Heart right ventricle (tissue), 16 donors: ENCODE measurements at regions of chr4 and their contacts with region 1.

Region 1: DNA sequence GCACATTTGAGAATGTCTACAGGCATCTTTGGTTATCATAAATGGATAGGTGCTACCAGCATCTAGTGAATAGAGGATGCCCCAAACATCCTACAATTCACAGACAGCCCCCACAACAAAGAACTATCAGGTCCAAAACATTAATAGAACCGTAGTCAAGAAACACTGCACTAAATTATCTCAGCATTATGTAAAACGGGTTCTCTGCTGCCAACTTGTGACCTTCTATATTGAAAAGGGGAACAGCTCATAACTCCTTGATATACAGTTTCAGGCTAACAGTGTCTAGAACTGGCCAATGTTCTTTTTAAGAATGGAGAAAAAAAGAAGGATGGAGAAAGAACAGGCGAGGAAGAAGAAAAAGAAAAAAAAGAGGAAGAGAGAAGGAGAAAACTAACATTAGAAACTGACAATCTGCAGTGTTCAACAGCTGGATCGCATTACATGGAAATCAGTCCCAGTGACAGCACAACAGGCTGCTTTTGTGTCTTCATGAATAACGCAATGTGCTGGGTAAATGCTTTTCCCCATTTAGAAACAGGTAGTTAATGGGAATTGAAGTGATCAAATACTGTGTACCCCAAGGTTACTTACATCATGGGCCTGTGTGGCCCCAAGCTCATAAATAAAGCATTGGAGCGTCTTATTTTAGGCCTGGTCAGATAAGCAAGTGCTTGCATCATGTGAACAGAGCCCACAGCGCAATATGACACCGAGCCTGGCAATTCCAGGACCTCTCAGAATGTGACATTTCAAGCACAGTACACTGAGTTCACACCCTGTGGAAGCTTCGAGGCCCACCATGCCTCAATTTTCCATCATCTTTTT is 339.5 kb downstream of the DHX15 start:
- DNase-seq: peak; percentile 46 to 75
- ATAC-seq: peak; percentile 73 to 97 (median 92)
- H3K4me3 ChIP-seq: no peak overlapping the region
- H3K27ac ChIP-seq: peak overlapping the region; percentile 29 to 90 (median 78)
- H3K4me1 ChIP-seq: peaks cover 11 to 73% (median 41%) of the 10 kb centered on the region in 9 donors
- H3K27me3 ChIP-seq: no peaks in the 10 kb centered on the region
- CTCF ChIP-seq: no peak

Region 2: DNA sequence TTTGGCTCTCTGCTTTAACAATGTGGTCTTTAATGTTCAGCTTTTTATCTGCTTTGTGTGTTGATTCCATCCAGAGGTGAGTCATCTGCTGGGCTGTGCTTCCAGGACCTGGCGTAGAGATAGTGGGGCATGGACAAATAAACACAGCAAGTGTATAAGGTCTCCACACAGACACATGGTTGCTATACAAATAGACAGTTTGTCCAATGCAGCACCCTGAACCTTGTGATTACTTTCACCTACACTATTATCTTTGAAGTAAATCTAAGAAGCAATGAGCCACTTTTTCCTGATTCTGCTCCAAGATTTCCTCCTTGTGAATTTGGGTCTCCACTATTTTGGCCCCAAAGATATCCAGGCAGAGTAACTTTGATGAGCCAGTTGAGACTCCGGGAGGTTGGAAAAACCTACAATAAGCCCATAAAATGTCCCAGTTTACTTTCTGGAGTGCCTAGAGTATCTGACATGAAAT is 367.1 kb before region 1 on chr4:
- intact Hi-C with region 1: loop called in 2 of 10 experiments (anchors 5 to 10 kb)
- DNase-seq: no peak
- ATAC-seq: peak in 6 of 8 donors; percentile 69 to 85 (median 72)
- H3K4me3 ChIP-seq: no peak overlapping the region
- H3K27ac ChIP-seq: peak overlapping the region; percentile 29 to 84 (median 74)
- H3K4me1 ChIP-seq: peaks cover 0 to 99% (median 23%) of the 10 kb centered on the region in 9 donors
- H3K27me3 ChIP-seq: no peaks in the 10 kb centered on the region
- CTCF ChIP-seq: no peak

Region 3: GRCh38 chr4:23934915-23935314 is 310.0 kb before region 1 on chr4:
- intact Hi-C with region 1: loop called in 4 of 10 experiments (anchors 2 to 5 kb)
- DNase-seq: peak; percentile 47 to 74
- ATAC-seq: peak; percentile 58 to 78 (median 71)
- H3K4me3 ChIP-seq: no peak overlapping the region
- H3K27ac ChIP-seq: peak overlapping the region; percentile 2 to 89 (median 62)
- H3K4me1 ChIP-seq: peaks cover 0 to 52% (median 22%) of the 10 kb centered on the region in 9 donors
- H3K27me3 ChIP-seq: no peaks in the 10 kb centered on the region
- CTCF ChIP-seq: peak in 3 of 9 donors; percentile 23 to 42 (median 25)

Region 4: GRCh38 chr4:24137963-24138601 is 106.8 kb before region 1 on chr4:
- intact Hi-C with region 1: no loop called
- DNase-seq: no peak
- ATAC-seq: peak in 1 of 8 donors; percentile 18
- H3K4me3 ChIP-seq: no peak overlapping the region
- H3K27ac ChIP-seq: no peak overlapping the region
- H3K4me1 ChIP-seq: peaks cover 0 to 11% (median 5%) of the 10 kb centered on the region in 9 donors
- H3K27me3 ChIP-seq: no peaks in the 10 kb centered on the region
- CTCF ChIP-seq: no peak

Region 5: DNA sequence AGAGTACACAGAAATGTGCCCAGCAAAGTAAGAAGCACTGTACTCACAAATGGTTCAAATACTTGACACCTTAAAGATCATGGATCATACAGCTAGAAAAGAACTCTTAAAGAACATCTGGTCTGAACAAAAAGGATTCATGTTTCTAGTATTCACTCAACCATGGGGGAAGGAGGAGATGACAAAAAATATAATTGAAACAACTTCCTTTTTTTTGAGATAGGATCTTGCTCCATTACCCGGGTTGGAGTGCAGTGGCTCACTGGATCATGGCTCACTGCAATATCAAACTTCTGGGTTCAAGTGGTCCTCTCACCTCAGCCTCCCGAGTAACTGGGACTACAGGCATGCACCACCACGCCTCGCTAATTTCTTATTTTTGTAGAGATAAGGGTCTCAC is 333.5 kb after region 1 on chr4:
- intact Hi-C with region 1: no loop called
- DNase-seq: no peak
- ATAC-seq: no peak
- H3K4me3 ChIP-seq: no peak overlapping the region
- H3K27ac ChIP-seq: no peak overlapping the region
- H3K4me1 ChIP-seq: peaks cover 0 to 83% (median 71%) of the 10 kb centered on the region in 9 donors
- H3K27me3 ChIP-seq: no peaks in the 10 kb centered on the region
- CTCF ChIP-seq: no peak